Left ventricle myocardium superior (tissue), 1 donor: ENCODE measurements at regions of chr2 and their contacts with region 1.

Region 1: DNA sequence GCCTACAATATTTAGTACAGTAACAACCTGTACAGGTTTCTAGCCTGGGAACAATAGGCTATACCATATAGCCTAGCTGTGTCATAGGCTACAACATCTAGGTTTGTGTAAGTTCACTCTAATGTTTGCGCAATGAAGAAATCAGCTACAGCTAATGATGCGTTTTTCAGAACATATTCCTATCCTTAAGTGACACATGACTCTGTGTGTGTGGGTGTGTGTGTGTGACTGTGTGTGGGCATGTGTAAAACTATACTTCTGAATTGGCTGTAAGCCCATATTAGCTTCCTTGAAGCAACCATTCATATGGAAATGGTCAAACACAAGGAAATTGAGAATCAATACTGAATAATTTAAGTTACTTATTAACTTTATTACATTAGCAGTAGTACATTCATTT is 120.8 kb upstream of the SULT1C3 start:
- DNase-seq: no peak
- ATAC-seq: no peak

Region 2: DNA sequence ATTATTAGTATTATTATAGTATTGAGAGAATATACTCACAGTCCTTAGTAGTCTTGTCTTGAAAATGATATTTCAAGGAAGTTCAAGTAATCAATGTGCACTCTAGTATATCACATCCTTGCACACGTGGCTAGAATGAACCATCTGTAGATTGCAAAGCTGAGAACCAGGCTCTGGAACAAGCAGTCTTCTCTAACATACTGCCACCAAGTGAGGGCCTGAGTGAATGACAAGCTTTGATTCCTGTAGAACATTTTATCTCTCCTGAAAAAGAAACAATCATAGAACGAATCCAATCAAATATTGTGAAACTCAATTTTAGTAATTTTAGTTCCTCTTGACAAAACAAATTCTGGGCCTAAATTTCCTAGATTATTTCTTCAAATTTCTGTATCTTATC is 65.4 kb after region 1 on chr2:
- intact Hi-C with region 1: no loop called
- DNase-seq: no peak
- ATAC-seq: no peak

Region 3: GRCh38 chr2:109009920-109010610 is 891.1 kb after region 1 on chr2:
- intact Hi-C with region 1: loop called (anchors 10 kb)
- DNase-seq: no peak
- ATAC-seq: no peak